Posterior vena cava (tissue), 2 donors: ENCODE measurements at regions of chr3 and their contacts with region 1.

Region 1: DNA sequence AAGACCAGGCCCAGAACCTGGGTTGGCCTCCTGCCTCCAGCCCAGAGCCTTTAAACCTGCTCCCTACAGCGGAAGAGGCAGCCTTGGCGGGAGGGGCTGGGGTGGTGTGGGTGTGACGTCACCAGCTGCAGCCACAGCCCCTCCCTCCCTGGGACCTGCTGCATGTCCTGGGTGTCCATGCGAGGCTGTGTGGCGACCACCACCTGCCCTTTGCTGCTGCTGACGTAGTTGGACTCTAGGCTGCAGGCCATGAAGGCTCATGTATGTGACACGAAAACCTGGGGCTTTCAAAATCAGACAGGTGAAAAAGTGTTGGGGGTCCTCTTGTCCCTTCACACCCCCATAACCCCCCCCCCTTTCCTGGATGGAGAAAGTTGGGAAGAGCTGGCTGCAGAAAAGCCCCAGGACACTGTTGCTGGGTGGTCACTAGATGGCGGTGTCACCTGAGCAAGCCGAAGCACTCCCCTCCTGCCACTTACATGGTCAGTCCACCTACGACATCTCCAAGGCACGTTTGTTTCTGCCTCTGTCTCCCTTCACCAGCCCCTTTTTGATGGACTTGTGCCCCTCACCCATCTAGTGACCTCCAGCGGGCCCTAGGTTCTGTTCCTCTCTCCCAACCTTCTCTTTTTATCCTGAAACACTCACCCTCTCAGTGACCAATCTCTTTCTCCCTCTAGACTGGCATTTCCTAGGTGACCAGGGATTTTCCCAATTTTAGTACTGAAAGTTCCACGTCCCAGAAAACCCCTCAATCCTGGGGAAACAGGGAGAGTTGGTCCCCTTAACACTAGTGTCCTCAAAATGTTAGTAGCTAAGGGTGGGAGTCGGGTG is 35.2 kb downstream of the SLC6A20 start:
- DNase-seq: no peak

Region 2: GRCh38 chr3:45906681-45907407 is 145.7 kb after region 1 on chr3:
- intact Hi-C with region 1: loop called in 1 of 2 experiments (anchors 10 kb)
- DNase-seq: no peak